Activated CD4-positive, alpha-beta T cell treated with anti-CD3 and anti-CD28 coated beads for 36 hours (primary cell): ENCODE measurements at regions of chr4 and their contacts with region 1.

Region 1: DNA sequence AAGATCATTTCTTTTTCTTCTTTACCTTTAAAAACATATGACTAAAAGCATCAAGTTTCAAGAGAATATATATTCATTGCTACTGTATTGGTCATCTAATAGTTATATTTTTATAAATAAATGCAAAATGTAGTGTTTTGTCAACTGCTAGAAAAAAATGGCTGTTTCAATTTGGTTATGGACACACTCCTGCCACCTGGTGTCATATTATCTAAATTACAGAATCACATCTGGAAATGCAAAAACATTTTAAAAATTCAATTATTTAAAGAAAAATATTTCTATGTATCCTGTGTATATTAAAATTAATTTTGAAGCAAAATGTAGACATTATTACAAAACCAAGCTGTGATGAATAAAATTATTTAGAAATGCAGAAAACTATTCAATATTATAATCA is 329.4 kb upstream of the PCDH18 start:
- DNase-seq: no peak
- ATAC-seq: no peak
- H3K4me3 Mint-ChIP-seq: no peak overlapping the region
- H3K27ac Mint-ChIP-seq: no peak overlapping the region
- H3K4me1 Mint-ChIP-seq: no peaks in the 10 kb centered on the region
- H3K27me3 Mint-ChIP-seq: no peaks in the 10 kb centered on the region

Region 2: GRCh38 chr4:137124278-137124932 is 737.3 kb before region 1 on chr4:
- CTCF ChIA-PET with region 1: interaction called, 3 read pairs
- POLR2A ChIA-PET with region 1: no interaction called
- intact Hi-C with region 1: loop called in 1 of 2 experiments (anchors 2 kb)
- DNase-seq: no peak
- ATAC-seq: no peak
- H3K4me3 Mint-ChIP-seq: no peak overlapping the region
- H3K27ac Mint-ChIP-seq: no peak overlapping the region
- H3K4me1 Mint-ChIP-seq: no peaks in the 10 kb centered on the region
- H3K27me3 Mint-ChIP-seq: no peaks in the 10 kb centered on the region

Region 3: GRCh38 chr4:139099366-139099982 is 1237.8 kb after region 1 on chr4:
- CTCF ChIA-PET with region 1: no interaction called
- POLR2A ChIA-PET with region 1: no interaction called
- intact Hi-C with region 1: no loop called
- DNase-seq: peak; percentile 84
- ATAC-seq: peak; percentile 66
- H3K4me3 Mint-ChIP-seq: no peak overlapping the region
- H3K27ac Mint-ChIP-seq: no peak overlapping the region
- H3K4me1 Mint-ChIP-seq: peaks cover 2% of the 10 kb centered on the region
- H3K27me3 Mint-ChIP-seq: no peaks in the 10 kb centered on the region